Activated CD4-positive, alpha-beta memory T cell treated with anti-CD3 and anti-CD28 coated beads for 36 hours (primary cell): ENCODE measurements at regions of chr4 and their contacts with region 1.

Region 1: GRCh38 chr4:87559109-87559837 is 30.1 kb upstream of the SPARCL1 start:
- DNase-seq: peak; percentile 69
- H3K4me3 Mint-ChIP-seq: no peak overlapping the region
- H3K27ac Mint-ChIP-seq: no peak overlapping the region
- H3K4me1 Mint-ChIP-seq: peaks cover 21% of the 10 kb centered on the region
- H3K27me3 Mint-ChIP-seq: no peaks in the 10 kb centered on the region

Region 2: GRCh38 chr4:87390891-87391575 is 168.2 kb before region 1 on chr4 and contains the start of gene HSD17B11:
- CTCF ChIA-PET with region 1: no interaction called
- POLR2A ChIA-PET with region 1: no interaction called
- intact Hi-C with region 1: loop called (anchors 5 kb)
- DNase-seq: peak; percentile 89
- H3K4me3 Mint-ChIP-seq: peak within 1 kb of the TSS; percentile 90
- H3K27ac Mint-ChIP-seq: peak within 1 kb of the TSS; percentile 78
- H3K4me1 Mint-ChIP-seq: peaks cover 31% of the 10 kb centered on the region
- H3K27me3 Mint-ChIP-seq: no peaks in the 10 kb centered on the region
- total RNA-seq, gene HSD17B11: 19.8 to 20.8 TPM

Region 3: DNA sequence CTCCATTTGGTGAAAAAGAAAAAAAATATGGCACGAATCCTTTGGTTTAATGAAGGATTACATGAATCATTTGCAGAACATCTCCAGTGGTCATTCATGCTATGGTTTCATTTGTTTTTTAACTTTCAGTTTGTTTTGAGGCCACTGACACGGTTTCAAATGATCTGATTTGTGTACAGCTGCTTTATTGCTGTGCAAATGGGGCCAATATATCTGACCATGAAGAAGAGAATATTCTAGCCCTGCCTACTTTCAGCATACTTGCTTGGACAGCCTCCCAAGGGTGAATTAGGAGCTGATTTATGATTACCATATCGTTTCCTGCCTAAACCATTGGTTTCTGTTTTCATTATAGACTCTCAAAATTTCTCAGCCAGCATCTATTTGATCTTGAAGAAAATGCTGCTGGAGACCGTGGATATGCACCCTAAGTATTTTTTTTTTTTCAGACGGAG is 60.8 kb before region 1 on chr4:
- CTCF ChIA-PET with region 1: no interaction called
- POLR2A ChIA-PET with region 1: no interaction called
- intact Hi-C with region 1: loop called (anchors 1 kb)
- DNase-seq: no peak
- H3K4me3 Mint-ChIP-seq: no peak overlapping the region
- H3K27ac Mint-ChIP-seq: no peak overlapping the region
- H3K4me1 Mint-ChIP-seq: peaks cover 21% of the 10 kb centered on the region
- H3K27me3 Mint-ChIP-seq: no peaks in the 10 kb centered on the region

Region 4: GRCh38 chr4:87574996-87575395 is 15.7 kb after region 1 on chr4:
- CTCF ChIA-PET with region 1: no interaction called
- POLR2A ChIA-PET with region 1: no interaction called
- intact Hi-C with region 1: loop called (anchors 1 kb)
- DNase-seq: no peak
- H3K4me3 Mint-ChIP-seq: no peak overlapping the region
- H3K27ac Mint-ChIP-seq: no peak overlapping the region
- H3K4me1 Mint-ChIP-seq: no peaks in the 10 kb centered on the region
- H3K27me3 Mint-ChIP-seq: peaks cover 3% of the 10 kb centered on the region

Region 5: DNA sequence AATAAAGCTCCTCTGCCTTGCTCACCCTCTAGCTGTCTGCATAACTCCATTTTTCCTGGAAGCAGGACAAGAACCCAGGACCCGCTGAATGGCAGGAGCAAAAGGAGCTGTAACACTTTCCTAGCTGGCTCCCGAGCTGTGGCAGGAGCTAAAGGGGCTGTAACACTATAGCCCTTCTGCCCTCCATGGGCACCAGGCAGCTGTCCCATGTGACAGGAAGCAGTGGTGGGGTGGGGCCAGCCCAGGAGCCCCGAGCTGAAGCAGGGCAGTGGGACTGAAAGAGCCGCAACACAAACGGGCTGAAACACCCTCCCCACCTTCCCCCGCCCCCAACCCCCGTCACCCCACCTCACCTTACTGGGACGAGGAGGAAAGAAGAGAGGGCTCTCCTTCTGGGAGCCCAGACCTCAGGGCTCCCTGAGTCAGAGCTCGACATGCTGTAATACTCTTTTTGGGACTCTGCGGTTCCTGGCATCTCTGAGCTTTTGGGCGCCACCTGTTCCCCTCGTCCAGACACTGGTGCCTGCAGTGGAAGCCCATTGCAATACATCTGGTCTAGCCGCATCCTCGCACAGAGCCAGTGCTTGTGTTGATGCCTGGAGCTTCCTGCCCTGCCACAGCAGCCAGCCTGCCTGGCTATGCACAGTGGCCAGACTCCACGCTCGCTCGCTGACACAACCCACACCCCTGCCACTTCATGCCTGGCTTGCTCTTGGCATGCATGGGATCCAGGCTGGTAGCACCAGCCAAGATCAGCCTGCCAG is 685.7 kb after region 1 on chr4:
- CTCF ChIA-PET with region 1: no interaction called
- POLR2A ChIA-PET with region 1: no interaction called
- intact Hi-C with region 1: no loop called
- DNase-seq: peak; percentile 54
- H3K4me3 Mint-ChIP-seq: peak overlapping the region; percentile 49
- H3K27ac Mint-ChIP-seq: no peak overlapping the region
- H3K4me1 Mint-ChIP-seq: peaks cover 10% of the 10 kb centered on the region
- H3K27me3 Mint-ChIP-seq: no peaks in the 10 kb centered on the region